ENCODE measurements at regions of chr7 and their contacts with region 1.

Region 1: GRCh38 chr7:123594813-123595241 is 6.8 kb upstream of the ASB15 start:
- DNase-seq: peak; percentile 67
- ATAC-seq: peak; percentile 92
- H3K4me3 Mint-ChIP-seq: peak overlapping the region; percentile 32
- H3K27ac Mint-ChIP-seq: 0 out of 2 replicates have a peak overlapping the region, but pooled peaks have one; percentile 66
- H3K4me1 Mint-ChIP-seq: peaks cover 15% of the 10 kb centered on the region
- H3K27me3 Mint-ChIP-seq: no peaks in the 10 kb centered on the region; the same call in none of the 2 replicates
- CTCF ChIP-seq: no peak

Region 2: GRCh38 chr7:123580406-123581161 is 14.2 kb before region 1 on chr7:
- CTCF ChIA-PET with region 1: interaction called, 11 read pairs
- POLR2A ChIA-PET with region 1: no interaction called
- DNase-seq: no peak
- ATAC-seq: peak; percentile 95
- H3K4me3 Mint-ChIP-seq: no peak overlapping the region
- H3K27ac Mint-ChIP-seq: no peak overlapping the region; the same call in 1 of the 2 replicates
- H3K4me1 Mint-ChIP-seq: peaks cover 38% of the 10 kb centered on the region
- H3K27me3 Mint-ChIP-seq: no peaks in the 10 kb centered on the region
- CTCF ChIP-seq: no peak